Activated CD4-positive, alpha-beta memory T cell treated with anti-CD3 and anti-CD28 coated beads, Interleukin-2, amount 10 ng/mL, durations not matched to agents 7 days and 5 days (primary cell): ENCODE measurements at regions of chr2 and their contacts with region 1.

Region 1: DNA sequence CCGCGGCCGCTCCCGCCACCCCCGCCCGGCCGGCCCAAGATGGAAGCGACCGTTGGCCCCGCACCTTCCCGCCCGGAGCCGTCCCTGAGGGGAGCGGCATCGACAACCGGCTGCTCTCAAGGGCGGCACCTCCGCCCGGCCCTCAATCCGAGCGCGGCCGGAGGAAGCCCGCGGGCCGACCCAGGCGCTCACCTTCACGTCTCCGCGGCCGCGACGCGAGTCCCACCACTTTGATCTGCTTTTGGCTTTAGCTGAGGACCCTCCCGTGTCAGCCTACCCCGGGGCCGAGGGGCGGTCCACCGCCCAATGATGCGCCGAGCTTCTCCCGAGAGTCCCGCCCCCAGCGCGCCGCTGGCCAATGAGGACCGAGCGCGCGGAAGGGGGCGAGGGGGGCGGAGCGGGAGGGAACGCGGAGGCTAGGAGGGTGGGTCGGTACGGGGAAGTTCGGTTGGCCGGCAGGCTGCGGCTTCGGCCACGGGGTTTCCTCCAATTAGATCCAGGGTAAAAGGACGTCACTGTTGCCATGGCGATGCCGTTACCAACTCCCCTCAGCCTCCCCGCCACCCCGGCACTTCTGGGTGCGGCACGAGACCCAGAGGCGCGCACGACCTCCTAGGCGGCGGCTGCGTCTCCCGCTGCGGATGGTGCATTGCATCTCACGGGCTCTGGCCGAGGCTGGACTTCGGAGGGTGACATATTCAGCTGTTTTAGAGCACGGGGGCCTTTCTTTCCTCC is at the start of gene YWHAQ:
- DNase-seq: peak; percentile 98
- H3K4me3 Mint-ChIP-seq: peak within 1 kb of the TSS; percentile 93
- H3K27ac Mint-ChIP-seq: peak within 1 kb of the TSS; percentile 91
- H3K4me1 Mint-ChIP-seq: peaks cover 46% of the 10 kb centered on the region
- H3K27me3 Mint-ChIP-seq: peaks cover 2% of the 10 kb centered on the region
- total RNA-seq, gene YWHAQ: 335 to 351 TPM

Region 2: GRCh38 chr2:9423100-9423921 is 207.6 kb before region 1 on chr2 and contains the starts of genes CPSF3 and ITGB1BP1:
- CTCF ChIA-PET with region 1: no interaction called
- POLR2A ChIA-PET with region 1: interaction called, 17 read pairs
- DNase-seq: peak; percentile 97
- H3K4me3 Mint-ChIP-seq: no peak within 1 kb of the TSS
- H3K27ac Mint-ChIP-seq: no peak within 1 kb of the TSS
- H3K4me1 Mint-ChIP-seq: peaks cover 40% of the 10 kb centered on the region
- H3K27me3 Mint-ChIP-seq: no peaks in the 10 kb centered on the region
- total RNA-seq, gene CPSF3: 49.7 to 51.7 TPM
- total RNA-seq, gene ITGB1BP1: 112 to 119 TPM

Region 3: DNA sequence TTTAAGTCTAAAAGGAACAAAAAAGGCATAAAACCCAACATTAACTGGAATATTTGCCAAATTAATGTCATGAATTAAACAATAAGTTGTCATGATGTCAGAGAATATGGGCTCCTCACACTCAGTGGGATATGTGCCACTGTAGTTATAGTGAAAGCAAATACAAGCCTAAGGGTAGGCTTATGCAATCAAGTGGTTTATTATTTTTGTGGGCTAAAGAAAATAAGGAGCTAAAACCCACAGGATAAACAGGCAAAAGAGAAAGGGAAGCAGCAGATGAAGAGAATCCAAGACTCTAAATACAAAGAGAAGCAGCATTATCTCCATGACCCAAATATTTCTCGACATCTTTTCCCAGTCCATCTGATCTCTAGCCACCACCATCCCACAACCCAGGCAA is 17.6 kb before region 1 on chr2:
- CTCF ChIA-PET with region 1: interaction called, 4 read pairs
- POLR2A ChIA-PET with region 1: interaction called, 49 read pairs
- DNase-seq: no peak
- H3K4me3 Mint-ChIP-seq: no peak overlapping the region
- H3K27ac Mint-ChIP-seq: no peak overlapping the region
- H3K4me1 Mint-ChIP-seq: peaks cover 89% of the 10 kb centered on the region
- H3K27me3 Mint-ChIP-seq: no peaks in the 10 kb centered on the region

Region 4: DNA sequence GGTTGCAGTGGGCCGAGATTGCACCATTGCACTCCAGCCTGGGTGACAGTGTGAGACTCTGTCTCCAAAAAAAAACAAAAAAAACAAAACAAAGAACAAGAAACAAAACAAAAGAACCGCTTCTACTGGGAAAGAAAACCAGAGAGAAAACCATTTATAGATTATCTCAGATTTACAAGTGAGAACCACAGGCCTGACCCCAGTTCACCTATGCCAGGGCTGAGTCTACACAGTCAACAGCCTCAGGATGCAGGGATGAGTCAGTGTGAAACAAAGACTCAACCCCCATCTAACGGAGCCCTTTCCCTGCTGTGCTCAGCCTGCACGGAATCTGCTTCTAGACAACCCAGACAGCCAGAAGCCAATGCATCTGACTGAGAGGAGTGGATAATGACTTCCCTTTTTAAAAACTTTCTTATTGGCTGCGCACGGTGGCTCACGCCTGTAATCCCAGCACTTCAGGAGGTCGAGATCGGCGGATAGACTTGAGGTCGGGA is 25.4 kb after region 1 on chr2:
- CTCF ChIA-PET with region 1: interaction called, 7 read pairs
- POLR2A ChIA-PET with region 1: interaction called, 110 read pairs
- DNase-seq: peak; percentile 88
- H3K4me3 Mint-ChIP-seq: peak overlapping the region; percentile 63
- H3K27ac Mint-ChIP-seq: peak overlapping the region; percentile 96
- H3K4me1 Mint-ChIP-seq: peaks cover 57% of the 10 kb centered on the region
- H3K27me3 Mint-ChIP-seq: no peaks in the 10 kb centered on the region

Region 5: GRCh38 chr2:9693211-9693520 is 62.2 kb after region 1 on chr2:
- CTCF ChIA-PET with region 1: no interaction called
- POLR2A ChIA-PET with region 1: interaction called, 20 read pairs
- DNase-seq: peak; percentile 50
- H3K4me3 Mint-ChIP-seq: no peak overlapping the region
- H3K27ac Mint-ChIP-seq: peak overlapping the region; percentile 62
- H3K4me1 Mint-ChIP-seq: peaks cover 39% of the 10 kb centered on the region
- H3K27me3 Mint-ChIP-seq: no peaks in the 10 kb centered on the region

Region 6: GRCh38 chr2:9739531-9739964 is 108.6 kb after region 1 on chr2:
- CTCF ChIA-PET with region 1: interaction called, 3 read pairs
- POLR2A ChIA-PET with region 1: interaction called, 41 read pairs
- DNase-seq: peak; percentile 77
- H3K4me3 Mint-ChIP-seq: peak overlapping the region; percentile 72
- H3K27ac Mint-ChIP-seq: peak overlapping the region; percentile 93
- H3K4me1 Mint-ChIP-seq: peaks cover 61% of the 10 kb centered on the region
- H3K27me3 Mint-ChIP-seq: peaks cover 2% of the 10 kb centered on the region

Region 7: GRCh38 chr2:9778012-9778411 is 147.1 kb after region 1 on chr2:
- CTCF ChIA-PET with region 1: interaction called, 4 read pairs
- POLR2A ChIA-PET with region 1: interaction called, 20 read pairs
- DNase-seq: peak; percentile 41
- H3K4me3 Mint-ChIP-seq: no peak overlapping the region
- H3K27ac Mint-ChIP-seq: no peak overlapping the region
- H3K4me1 Mint-ChIP-seq: peaks cover 54% of the 10 kb centered on the region
- H3K27me3 Mint-ChIP-seq: no peaks in the 10 kb centered on the region

Region 8: GRCh38 chr2:11305958-11306357 is 1675.0 kb after region 1 on chr2:
- CTCF ChIA-PET with region 1: no interaction called
- POLR2A ChIA-PET with region 1: no interaction called
- DNase-seq: no peak
- H3K4me3 Mint-ChIP-seq: no peak overlapping the region
- H3K27ac Mint-ChIP-seq: no peak overlapping the region
- H3K4me1 Mint-ChIP-seq: peaks cover 5% of the 10 kb centered on the region
- H3K27me3 Mint-ChIP-seq: no peaks in the 10 kb centered on the region